Posterior cingulate gyrus (tissue), 11 donors: ENCODE measurements at regions of chr11 and their contacts with region 1.

Region 1: DNA sequence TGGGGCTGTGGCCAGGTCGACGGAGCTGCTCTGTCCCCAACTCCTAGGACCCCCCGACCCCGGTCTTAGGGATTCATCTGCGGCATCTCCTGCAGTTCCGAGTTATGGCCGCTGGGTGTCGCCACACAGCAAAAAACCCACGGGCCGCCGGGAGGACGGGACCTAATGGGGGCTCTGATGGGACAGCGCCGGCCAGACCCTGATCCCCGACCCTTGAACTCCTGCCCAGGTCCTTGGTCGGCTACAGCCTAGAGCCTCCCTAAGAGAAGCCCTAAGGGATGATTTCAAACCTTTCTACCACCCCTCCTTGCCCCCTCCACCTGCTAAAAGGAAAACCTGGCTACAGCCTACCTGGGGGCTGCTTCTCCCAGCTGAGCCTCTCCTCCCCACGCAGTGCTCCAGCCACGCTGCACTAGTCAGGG is 30.8 kb upstream of the LRRC10B start:
- DNase-seq: peak in 9 of 10 donors; percentile 48 to 94 (median 65)

Region 2: GRCh38 chr11:61446211-61446651 is 31.5 kb before region 1 on chr11:
- intact Hi-C with region 1: no loop called
- DNase-seq: peak; percentile 87 to 99 (median 94)

Region 3: DNA sequence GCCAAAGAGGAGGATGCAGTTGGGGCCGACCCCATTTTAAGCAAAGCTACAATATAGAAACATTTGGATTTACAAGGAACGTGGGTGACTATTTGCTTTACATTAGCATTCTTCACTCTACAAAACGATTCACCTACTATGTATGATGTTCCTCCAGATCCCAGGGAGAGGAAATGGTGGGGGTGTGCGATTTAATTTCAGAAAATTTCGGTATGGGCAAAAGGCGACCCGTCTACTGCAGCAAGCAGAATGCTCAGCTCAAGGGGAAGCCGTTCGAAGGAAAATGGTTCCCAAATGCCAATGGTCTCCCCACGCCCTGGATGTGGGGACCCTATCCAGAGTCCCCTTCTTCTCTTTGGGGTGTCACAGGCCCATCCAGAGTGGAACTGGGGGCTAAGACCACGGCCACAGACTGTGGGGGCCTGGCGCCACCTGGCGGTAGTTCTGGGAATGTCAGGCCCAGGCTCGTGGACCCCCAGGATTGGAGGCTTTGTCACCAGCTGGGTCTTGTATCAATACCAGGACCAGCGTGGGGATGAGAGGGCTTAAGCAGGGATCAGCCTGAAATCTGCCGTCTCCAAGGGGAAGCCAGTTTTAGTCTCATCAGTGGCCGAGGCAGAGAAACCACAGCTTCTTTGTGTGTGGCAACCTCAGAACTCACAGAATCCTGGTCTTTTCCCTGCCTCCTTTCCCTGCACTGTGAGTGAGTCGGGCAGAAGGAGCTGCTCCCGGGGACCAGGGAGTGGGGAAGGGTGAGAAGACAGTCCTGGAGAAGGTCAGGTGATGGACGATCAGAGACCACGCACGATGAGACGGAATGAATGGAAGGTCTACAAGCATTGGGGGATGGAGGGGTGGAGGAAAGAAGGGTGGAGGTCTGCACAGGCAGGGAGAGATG is 39.2 kb after region 1 on chr11:
- intact Hi-C with region 1: loop called (anchors 2 kb)
- DNase-seq: peak in 6 of 10 donors; percentile 42 to 90 (median 60)

Region 4: GRCh38 chr11:61627567-61628445 is 150.1 kb after region 1 on chr11:
- intact Hi-C with region 1: no loop called
- DNase-seq: peak; percentile 25 to 92 (median 58)

Region 5: GRCh38 chr11:61639816-61640443 is 162.2 kb after region 1 on chr11:
- intact Hi-C with region 1: loop called (anchors 5 kb)
- DNase-seq: no peak

Region 6: DNA sequence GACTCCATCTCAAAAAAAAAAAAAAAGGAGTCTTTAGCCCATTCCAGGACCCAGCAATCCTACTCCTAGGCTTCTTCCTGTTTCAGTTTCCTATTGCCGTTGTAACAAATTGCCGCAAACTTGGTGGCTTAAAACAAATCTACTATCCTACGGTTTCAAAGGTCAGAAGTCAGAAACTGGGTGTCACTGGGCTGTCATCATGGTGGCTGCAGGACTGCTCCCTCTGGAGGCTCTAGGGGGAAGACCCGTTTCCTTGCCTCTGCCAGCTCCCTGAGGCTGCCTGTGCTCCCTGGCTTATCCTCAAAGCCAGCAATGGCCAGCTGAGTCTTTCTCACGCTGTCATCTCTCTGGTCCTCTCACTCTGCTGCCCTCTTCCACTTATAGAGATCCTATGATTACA is 193.8 kb after region 1 on chr11:
- intact Hi-C with region 1: no loop called
- DNase-seq: peak in 2 of 10 donors; percentile 5 to 47